ENCODE measurements at regions of chr1 and their contacts with region 1.

Region 1: DNA sequence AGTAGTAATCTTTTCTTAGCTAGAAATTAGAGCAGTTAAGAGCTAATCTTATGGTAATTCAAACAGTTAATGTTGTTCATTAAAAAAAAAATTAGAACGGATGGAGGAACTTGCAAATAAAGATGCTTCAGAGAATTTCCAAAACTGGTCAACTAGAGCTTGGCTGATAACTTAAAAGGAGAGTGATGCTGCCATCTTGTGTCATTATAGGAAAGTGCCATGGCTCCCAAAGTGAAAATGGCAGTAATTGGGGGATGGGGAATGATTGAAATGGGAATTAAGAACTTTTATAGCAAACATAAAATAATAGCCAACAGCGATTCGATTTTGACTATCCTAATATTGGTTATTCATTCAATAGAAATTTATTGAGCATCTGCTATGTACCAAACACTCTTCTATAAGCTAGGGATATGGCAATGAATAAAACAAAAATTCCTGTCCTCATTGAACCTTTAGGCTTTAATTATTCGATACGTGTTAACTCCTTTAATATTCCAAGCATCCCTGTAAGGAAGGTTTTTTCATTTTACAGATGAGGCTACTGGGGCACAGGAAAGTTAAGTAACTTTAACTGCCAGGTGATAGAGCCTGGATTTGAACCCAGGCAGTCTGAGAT is 5.7 kb upstream of the PLPP3 start:
- DNase-seq: no peak
- ATAC-seq: no peak
- H3K4me3 Mint-ChIP-seq: no peak overlapping the region
- H3K27ac Mint-ChIP-seq: no peak overlapping the region
- H3K4me1 Mint-ChIP-seq: no peaks in the 10 kb centered on the region
- H3K27me3 Mint-ChIP-seq: peaks cover 14% of the 10 kb centered on the region

Region 2: DNA sequence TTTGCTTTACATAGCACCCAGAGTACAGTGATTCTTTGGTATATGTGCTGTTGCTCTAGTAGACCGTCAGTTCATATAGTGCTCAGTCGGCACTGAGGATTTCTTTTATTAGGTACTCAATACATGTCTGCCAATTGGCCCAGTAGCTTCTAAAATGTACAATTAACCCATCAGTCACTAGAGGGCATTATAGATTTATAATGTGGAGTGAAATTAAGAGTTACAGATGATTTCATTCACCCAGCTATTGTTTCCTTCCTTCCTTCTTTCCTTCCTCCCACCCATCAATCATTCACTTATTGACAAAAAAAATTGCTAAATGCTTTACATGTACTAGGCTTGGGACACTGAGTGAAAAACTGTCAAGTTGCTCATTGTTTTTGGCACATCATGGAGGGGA is 1106.3 kb before region 1 on chr1:
- CTCF ChIA-PET with region 1: interaction called, 11 read pairs
- DNase-seq: no peak
- ATAC-seq: no peak
- H3K4me3 Mint-ChIP-seq: no peak overlapping the region
- H3K27ac Mint-ChIP-seq: no peak overlapping the region
- H3K4me1 Mint-ChIP-seq: no peaks in the 10 kb centered on the region
- H3K27me3 Mint-ChIP-seq: peaks cover 27% of the 10 kb centered on the region

Region 3: DNA sequence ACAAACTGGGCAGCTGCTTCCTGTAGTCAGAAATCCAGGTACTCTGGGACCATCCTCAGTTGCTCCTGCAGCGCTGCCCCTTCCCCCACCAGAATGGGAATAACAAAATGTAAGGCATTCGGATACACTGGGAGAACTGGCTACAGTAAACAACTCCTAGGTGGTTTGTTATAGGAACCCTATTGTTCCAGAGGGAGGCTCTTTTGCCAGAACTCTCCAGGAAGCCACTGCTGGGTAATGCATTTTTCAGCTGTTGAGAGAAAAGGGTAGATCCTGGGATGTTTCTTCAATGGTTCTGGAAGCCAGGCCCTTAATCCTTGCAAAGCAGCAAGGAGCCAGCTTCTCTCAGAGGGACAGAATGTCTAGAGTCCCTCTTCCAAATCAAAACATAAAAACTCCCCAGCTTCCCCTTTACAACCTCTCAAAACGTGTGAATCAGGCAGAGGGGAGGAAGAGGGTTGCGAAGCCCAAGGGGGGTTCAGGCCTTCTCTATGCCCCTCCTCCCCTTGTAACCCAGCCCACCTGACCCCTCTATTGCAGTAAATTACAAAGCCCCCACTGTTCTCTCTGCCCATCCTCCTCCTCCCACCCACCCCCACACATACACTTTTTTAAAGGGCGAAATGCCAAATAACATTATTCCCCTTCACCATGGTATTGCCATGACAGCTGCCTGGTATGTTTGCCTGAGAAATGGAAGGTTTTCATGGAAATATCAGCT is 34.7 kb before region 1 on chr1:
- CTCF ChIA-PET with region 1: no interaction called
- DNase-seq: no peak
- ATAC-seq: no peak
- H3K4me3 Mint-ChIP-seq: no peak overlapping the region
- H3K27ac Mint-ChIP-seq: no peak overlapping the region
- H3K4me1 Mint-ChIP-seq: no peaks in the 10 kb centered on the region
- H3K27me3 Mint-ChIP-seq: no peaks in the 10 kb centered on the region

Region 4: DNA sequence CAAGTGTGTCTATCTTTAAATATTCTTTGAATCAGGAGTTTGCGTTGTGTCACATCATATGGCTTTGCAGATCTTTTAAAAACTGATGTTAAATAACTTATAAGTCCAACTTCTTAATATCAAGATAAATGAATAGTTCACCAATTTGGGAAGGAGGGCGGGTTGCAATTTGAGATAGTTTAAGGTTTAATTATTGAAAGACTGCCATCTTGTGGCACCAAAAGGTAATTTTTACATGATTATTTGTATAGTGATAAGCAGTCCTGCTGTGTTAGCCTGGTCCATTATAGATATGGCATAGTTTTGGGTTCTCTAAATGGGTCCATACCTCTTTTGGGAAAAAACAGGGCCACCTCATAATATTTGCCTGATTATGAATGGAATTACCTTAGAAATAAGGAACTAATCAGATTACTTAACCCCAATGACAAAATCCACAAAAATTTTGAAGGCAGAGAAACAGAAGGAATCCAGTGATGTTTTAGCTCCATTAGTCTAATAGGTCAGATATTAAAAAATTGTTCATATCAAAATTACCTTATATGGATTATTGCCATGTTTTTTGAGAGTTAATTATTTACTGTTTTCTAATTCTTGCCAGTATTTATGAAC is 124.4 kb after region 1 on chr1:
- CTCF ChIA-PET with region 1: no interaction called
- DNase-seq: no peak
- ATAC-seq: no peak
- H3K4me3 Mint-ChIP-seq: no peak overlapping the region
- H3K27ac Mint-ChIP-seq: no peak overlapping the region
- H3K4me1 Mint-ChIP-seq: no peaks in the 10 kb centered on the region
- H3K27me3 Mint-ChIP-seq: peaks cover 15% of the 10 kb centered on the region

Region 5: GRCh38 chr1:56774067-56774609 is 189.1 kb after region 1 on chr1:
- CTCF ChIA-PET with region 1: no interaction called
- DNase-seq: no peak
- ATAC-seq: peak; percentile 20
- H3K4me3 Mint-ChIP-seq: peak overlapping the region; percentile 3
- H3K27ac Mint-ChIP-seq: no peak overlapping the region
- H3K4me1 Mint-ChIP-seq: peaks cover 5% of the 10 kb centered on the region
- H3K27me3 Mint-ChIP-seq: peaks cover 3% of the 10 kb centered on the region

Region 6: DNA sequence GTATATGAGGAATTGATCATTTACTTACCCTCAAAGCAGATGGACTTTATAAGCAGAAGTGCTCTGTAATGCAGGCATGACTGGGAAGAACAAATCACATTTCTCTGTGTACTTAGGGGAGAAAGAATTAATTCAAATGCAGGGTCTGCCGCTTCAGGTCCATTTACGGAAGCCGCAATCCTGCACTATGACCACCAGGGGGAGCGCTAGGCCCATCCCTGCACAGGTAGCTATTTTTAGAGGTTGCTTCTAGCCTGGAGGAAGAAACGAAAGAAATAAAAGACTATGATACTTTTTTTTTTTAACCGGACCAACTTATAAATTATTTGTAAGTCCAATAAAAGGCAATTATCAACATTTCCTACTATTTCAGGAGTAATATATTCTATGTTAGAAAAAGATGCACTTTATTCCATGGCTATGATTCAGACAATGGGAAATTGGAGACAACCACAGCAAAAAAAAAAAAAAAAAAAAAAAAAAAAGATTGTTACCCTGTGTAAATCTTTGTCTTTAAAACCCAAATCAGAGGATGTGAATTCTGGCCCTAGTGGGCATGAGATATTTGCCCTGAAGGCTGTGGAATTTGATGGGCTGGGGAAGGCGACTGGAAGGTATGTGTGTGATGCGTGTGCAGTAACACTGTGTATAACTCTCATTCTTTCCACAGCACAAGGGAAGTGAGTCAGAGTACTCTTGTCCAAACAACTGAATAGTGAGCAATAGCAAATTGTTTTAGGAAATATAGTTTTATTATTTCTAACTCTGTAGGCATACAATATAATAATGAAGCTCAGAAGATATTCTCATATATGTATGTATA is 247.1 kb after region 1 on chr1:
- CTCF ChIA-PET with region 1: no interaction called
- DNase-seq: peak; percentile 73
- ATAC-seq: peak; percentile 60
- H3K4me3 Mint-ChIP-seq: no peak overlapping the region
- H3K27ac Mint-ChIP-seq: no peak overlapping the region
- H3K4me1 Mint-ChIP-seq: peaks cover 2% of the 10 kb centered on the region
- H3K27me3 Mint-ChIP-seq: peaks cover 2% of the 10 kb centered on the region

Measured in activated CD8-positive, alpha-beta memory T cell treated with anti-CD3 and anti-CD28 coated beads, Interleukin-2, amount 10 ng/mL, durations not matched to agents 7 days and 5 days (primary cell).